ENCODE measurements at regions of chr21 and their contacts with region 1.

Region 1: GRCh38 chr21:40964691-40965090 is 117.7 kb upstream of the DSCAM start:
- DNase-seq: no peak
- H3K4me3 ChIP-seq: no peak overlapping the region
- H3K27ac ChIP-seq: no peak overlapping the region
- H3K4me1 ChIP-seq: peaks cover 3% of the 10 kb centered on the region
- H3K27me3 ChIP-seq: no peaks in the 10 kb centered on the region
- CTCF ChIP-seq: no peak

Region 2: DNA sequence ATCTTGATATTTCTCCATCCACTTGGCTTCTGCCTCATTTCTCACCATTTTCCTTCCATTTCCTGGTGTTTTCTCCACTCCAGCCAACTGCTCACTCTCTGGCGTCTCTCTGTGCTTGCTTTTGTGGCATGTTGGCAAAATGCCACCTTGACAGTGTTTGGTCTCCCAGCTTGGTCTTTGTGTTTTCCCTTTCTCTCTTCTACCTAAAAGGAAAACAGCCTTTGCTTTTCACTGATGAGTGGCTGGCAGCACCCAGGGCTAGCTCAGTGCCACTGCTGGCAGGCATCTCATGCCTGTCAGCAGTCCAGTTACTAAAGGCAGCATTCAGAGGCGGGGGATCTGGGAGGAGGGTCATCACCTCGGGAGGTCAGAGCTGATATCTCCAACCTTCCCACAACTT is 62.4 kb before region 1 on chr21:
- CTCF ChIA-PET with region 1: no interaction called
- dilution Hi-C with region 1: no loop called
- in situ Hi-C with region 1: loop called in 1 of 2 experiments (anchors 10 kb)
- intact Hi-C with region 1: no loop called
- DNase-seq: no peak
- H3K4me3 ChIP-seq: no peak overlapping the region
- H3K27ac ChIP-seq: no peak overlapping the region
- H3K4me1 ChIP-seq: no peaks in the 10 kb centered on the region
- H3K27me3 ChIP-seq: no peaks in the 10 kb centered on the region
- CTCF ChIP-seq: no peak

Region 3: DNA sequence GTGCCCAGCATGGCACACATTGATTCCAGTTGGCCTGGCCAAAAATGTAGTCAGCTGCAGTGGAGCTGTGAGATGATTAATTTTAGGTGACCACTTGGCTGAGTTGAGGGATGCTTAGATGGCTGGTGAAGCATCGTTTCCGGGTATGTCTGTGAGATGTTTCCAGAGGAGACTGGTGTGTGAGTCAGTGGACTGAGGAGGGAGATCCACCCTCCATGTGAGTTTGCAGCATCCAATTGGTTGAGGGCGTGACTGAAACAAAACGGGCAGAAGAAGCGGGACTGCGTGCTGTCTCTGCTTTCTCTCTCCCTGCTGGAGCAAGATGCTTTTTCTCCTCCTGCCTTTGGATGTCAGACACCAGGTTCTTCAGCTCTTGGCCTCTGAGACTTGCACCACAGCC is 49.6 kb before region 1 on chr21:
- CTCF ChIA-PET with region 1: no interaction called
- dilution Hi-C with region 1: no loop called
- in situ Hi-C with region 1: no loop called
- intact Hi-C with region 1: no loop called
- DNase-seq: no peak
- H3K4me3 ChIP-seq: no peak overlapping the region
- H3K27ac ChIP-seq: no peak overlapping the region
- H3K4me1 ChIP-seq: peaks cover 4% of the 10 kb centered on the region
- H3K27me3 ChIP-seq: no peaks in the 10 kb centered on the region
- CTCF ChIP-seq: no peak

Region 4: GRCh38 chr21:40931197-40931596 is 33.5 kb before region 1 on chr21:
- CTCF ChIA-PET with region 1: no interaction called
- dilution Hi-C with region 1: loop called (anchors 5 kb)
- in situ Hi-C with region 1: no loop called
- intact Hi-C with region 1: no loop called
- DNase-seq: no peak
- H3K4me3 ChIP-seq: no peak overlapping the region
- H3K27ac ChIP-seq: no peak overlapping the region
- H3K4me1 ChIP-seq: peaks cover 2% of the 10 kb centered on the region
- H3K27me3 ChIP-seq: no peaks in the 10 kb centered on the region
- CTCF ChIP-seq: no peak

Region 5: GRCh38 chr21:40993039-40993438 is 28.3 kb after region 1 on chr21:
- CTCF ChIA-PET with region 1: no interaction called
- dilution Hi-C with region 1: no loop called
- in situ Hi-C with region 1: no loop called
- intact Hi-C with region 1: no loop called
- DNase-seq: no peak
- H3K4me3 ChIP-seq: no peak overlapping the region
- H3K27ac ChIP-seq: no peak overlapping the region
- H3K4me1 ChIP-seq: no peaks in the 10 kb centered on the region
- H3K27me3 ChIP-seq: no peaks in the 10 kb centered on the region
- CTCF ChIP-seq: no peak